ENCODE measurements at regions of chr18 and their contacts with region 1.

Region 1: DNA sequence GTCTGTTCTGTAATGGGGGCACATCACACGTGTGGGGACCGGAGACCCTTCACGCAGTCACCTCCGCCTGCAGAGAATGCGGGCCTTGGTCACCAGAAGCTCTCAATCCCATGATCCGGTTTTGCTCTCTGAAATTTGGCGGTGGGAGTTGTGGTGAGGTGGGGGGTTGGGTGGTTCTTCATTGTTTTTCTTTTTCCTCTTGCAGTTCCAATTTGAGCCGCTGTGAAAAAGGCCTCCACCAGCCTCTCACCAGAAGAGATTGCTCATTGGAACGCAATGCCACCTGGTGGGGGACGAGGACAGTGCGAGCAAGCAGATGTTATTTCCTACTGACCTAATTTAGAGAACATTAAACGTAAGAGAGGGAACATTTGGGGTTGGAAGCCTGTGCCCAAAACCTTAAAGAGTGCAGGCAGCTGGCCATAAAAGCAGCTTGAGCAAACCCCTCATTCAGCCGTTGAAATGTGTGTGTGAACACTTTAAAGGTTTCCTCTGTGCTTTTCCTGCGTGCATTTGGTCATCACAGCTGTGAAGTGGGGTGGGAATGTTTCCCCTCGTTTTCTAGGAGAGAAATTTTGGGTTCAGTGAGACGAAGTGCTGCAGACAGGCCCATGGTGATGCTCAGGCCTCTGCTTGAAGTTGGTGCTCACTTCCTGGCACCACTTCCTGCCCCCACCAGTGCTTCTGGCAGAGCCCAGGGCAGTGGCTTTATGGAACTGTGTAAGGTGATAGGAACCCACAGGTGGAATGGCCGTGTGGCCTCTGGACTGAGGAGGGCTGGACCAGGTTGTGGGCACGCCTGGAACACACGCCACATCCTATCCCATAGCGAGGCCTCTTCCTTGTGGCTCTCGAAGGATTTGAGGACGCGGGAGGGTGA is 61.7 kb downstream of the ZCCHC2 start:
- DNase-seq: peak; percentile 94
- H3K4me3 Mint-ChIP-seq: peak overlapping the region; percentile 59
- H3K27ac Mint-ChIP-seq: peak overlapping the region; percentile 82
- H3K4me1 Mint-ChIP-seq: peaks cover 40% of the 10 kb centered on the region
- H3K27me3 Mint-ChIP-seq: no peaks in the 10 kb centered on the region

Region 2: DNA sequence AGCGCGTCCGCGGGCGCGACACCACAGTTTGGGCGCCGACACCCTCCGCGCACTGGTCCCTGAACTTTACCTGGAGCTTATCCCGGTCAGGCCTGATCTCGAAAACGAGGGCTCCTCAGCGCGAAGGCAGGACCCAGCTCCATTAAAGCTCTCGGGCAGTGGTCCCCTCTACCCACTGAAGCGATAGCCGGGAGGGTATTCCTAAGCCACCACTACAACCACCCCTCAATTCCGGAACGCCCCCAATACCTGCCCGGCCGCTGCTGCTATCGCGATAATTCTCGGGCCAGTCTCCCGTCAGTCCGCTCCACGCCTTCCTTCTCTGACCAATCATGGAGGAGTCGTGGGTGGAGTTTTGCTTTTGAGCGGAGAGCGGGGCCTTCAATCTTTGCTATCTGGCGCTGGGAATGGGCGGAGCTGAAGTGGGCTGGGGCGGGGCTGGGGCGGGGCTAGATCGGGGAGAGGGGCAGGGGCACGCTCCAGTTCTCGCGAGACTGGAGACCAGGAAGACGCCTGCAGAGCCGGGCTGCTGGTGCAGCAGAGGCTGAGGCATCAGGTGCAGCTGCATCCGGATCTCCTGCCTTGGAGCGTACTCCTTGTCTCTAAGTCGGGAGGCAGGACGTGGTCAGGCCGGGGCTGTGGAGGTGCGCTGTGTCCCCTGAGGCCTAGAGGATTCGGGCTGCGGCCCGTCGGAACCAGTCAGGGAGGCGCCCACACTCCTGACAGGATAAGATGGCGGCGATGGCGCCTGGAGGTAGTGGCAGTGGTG is 397.5 kb before region 1 on chr18 and contains the starts of genes PIGN and RELCH:
- intact Hi-C with region 1: loop called (anchors 2 kb)
- DNase-seq: peak; percentile 98
- H3K4me3 Mint-ChIP-seq: peak within 1 kb of the TSS; percentile 100
- H3K27ac Mint-ChIP-seq: peak within 1 kb of the TSS; percentile 97
- H3K4me1 Mint-ChIP-seq: peaks cover 42% of the 10 kb centered on the region
- H3K27me3 Mint-ChIP-seq: no peaks in the 10 kb centered on the region
- total RNA-seq, gene PIGN: 32.0 and 33.9 TPM in 2 replicates
- total RNA-seq, gene RELCH: 30.6 and 31.1 TPM in 2 replicates

Region 3: GRCh38 chr18:62957885-62958472 is 373.5 kb after region 1 on chr18:
- intact Hi-C with region 1: loop called (anchors 2 kb)
- DNase-seq: peak; percentile 89
- H3K4me3 Mint-ChIP-seq: no peak overlapping the region
- H3K27ac Mint-ChIP-seq: no peak overlapping the region
- H3K4me1 Mint-ChIP-seq: peaks cover 14% of the 10 kb centered on the region
- H3K27me3 Mint-ChIP-seq: no peaks in the 10 kb centered on the region

Measured in activated CD4-positive, alpha-beta T cell treated with anti-CD3 and anti-CD28 coated beads, Interleukin-2, amount 10 ng/mL, durations not matched to agents 24 days and 14 days (primary cell).